K562 (cell line): ENCODE measurements at regions of chrX and their contacts with region 1.

Region 1: GRCh38 chrX:153971450-153972367 is at the start of gene HCFC1:
- DNase-seq: peak; percentile 68 to 93 (median 74)
- ATAC-seq: peak; percentile 60
- H3K4me3 ChIP-seq: peak within 1 kb of the TSS; percentile 84
- H3K27ac ChIP-seq: peak within 1 kb of the TSS; percentile 100
- H3K4me1 ChIP-seq: peaks cover 34 to 57% of the 10 kb centered on the region in 2 experiments
- H3K27me3 ChIP-seq: no peaks in the 10 kb centered on the region
- CTCF ChIP-seq: no peak
- EP300 ChIP-seq: no peak; the same call in 1 of the 2 replicates
- POLR2A ChIP-seq: peak; percentile 80
- RAD21 ChIP-seq: no peak
- polyA plus RNA-seq, gene HCFC1: 2.8 to 10.5 TPM

Region 2: GRCh38 chrX:153927922-153928760 is 43.6 kb before region 1 on chrX:
- CTCF ChIA-PET with region 1: no interaction called
- POLR2A ChIA-PET with region 1: interaction called, 5 read pairs
- in situ Hi-C with region 1: no loop called
- intact Hi-C with region 1: loop called (anchors 1 kb)
- DNase-seq: peak; percentile 85 to 97 (median 90)
- ATAC-seq: peak; percentile 90
- H3K4me3 ChIP-seq: peak overlapping the region; percentile 58
- H3K27ac ChIP-seq: peak overlapping the region; percentile 98
- H3K4me1 ChIP-seq: peaks cover 29 to 66% of the 10 kb centered on the region in 2 experiments; a peak in 4 of 5 replicates
- H3K27me3 ChIP-seq: no peaks in the 10 kb centered on the region
- CTCF ChIP-seq: peak in 2 of 3 experiments; percentile 33 to 38; a peak in 4 of 6 replicates
- EP300 ChIP-seq: no peak
- POLR2A ChIP-seq: peak; percentile 69
- RAD21 ChIP-seq: peak; percentile 14 to 25; a peak in 2 of 4 replicates

Region 3: GRCh38 chrX:153947009-153947769 is 24.5 kb before region 1 on chrX:
- CTCF ChIA-PET with region 1: no interaction called
- POLR2A ChIA-PET with region 1: interaction called, 17 read pairs
- in situ Hi-C with region 1: no loop called
- intact Hi-C with region 1: no loop called
- DNase-seq: peak; percentile 62 to 90 (median 72)
- ATAC-seq: peak; percentile 92
- H3K4me3 ChIP-seq: no peak overlapping the region
- H3K27ac ChIP-seq: peak overlapping the region; percentile 53; the same call in 2 of the 3 replicates
- H3K4me1 ChIP-seq: peaks cover 8 to 80% of the 10 kb centered on the region in 2 experiments; a peak in 4 of 5 replicates
- H3K27me3 ChIP-seq: no peaks in the 10 kb centered on the region
- CTCF ChIP-seq: peak; percentile 97 to 99 (median 99)
- EP300 ChIP-seq: no peak
- POLR2A ChIP-seq: peak; percentile 56; the same call in 1 of the 2 replicates
- RAD21 ChIP-seq: peak; percentile 74

Region 4: DNA sequence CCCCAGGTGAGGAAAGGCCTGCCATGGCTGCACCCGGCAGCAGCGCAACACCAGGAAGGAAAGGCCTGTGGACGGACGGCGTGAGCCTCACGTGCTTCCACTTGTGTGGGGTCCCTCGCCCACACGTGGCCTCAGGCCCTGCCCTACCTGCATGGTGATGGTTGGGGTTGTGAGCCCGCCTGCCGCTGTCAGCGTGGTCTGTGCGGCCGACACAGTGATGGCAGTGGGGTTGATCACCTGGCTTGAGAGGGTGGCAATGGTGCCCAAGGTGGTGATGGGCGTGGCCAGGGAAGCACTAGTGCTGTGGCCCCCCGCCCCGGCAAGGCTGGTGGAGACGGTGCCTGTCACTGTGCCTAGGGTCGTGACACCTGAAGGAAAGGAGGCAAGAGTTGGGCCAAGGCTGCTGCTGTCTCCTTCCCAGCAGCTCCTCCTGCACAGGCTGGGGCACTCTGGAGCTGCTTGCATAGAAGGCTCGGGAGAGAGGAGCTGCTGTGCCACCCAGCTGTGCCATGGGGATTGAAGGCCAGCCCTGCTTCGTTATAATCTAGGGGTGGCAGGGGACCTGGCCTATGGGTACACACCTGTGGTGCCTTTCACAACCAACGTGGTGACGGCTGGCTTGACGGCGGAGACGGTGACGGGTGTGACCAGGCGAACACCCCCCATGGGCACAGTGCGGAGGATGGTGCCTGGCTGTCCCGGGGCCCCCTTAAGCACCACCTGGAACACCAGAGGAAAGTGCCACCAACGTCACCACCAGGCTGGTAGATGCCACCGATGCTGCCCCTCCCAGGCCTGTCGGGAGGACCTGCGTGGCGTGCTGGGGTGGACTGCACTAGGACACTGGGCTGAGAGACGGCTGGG is 15.4 kb before region 1 on chrX:
- CTCF ChIA-PET with region 1: interaction called, 3 read pairs
- POLR2A ChIA-PET with region 1: interaction called, 24 read pairs
- in situ Hi-C with region 1: no loop called
- intact Hi-C with region 1: no loop called
- DNase-seq: no peak
- ATAC-seq: no peak
- H3K4me3 ChIP-seq: no peak overlapping the region
- H3K27ac ChIP-seq: no peak overlapping the region
- H3K4me1 ChIP-seq: peaks cover 0 to 29% of the 10 kb centered on the region in 2 experiments; a peak in 2 of 5 replicates
- H3K27me3 ChIP-seq: no peaks in the 10 kb centered on the region
- CTCF ChIP-seq: no peak
- EP300 ChIP-seq: no peak
- POLR2A ChIP-seq: no peak
- RAD21 ChIP-seq: no peak

Region 5: GRCh38 chrX:153961292-153961691 is 10.4 kb before region 1 on chrX:
- CTCF ChIA-PET with region 1: interaction called, 3 read pairs
- POLR2A ChIA-PET with region 1: interaction called, 24 read pairs
- in situ Hi-C with region 1: no loop called
- intact Hi-C with region 1: no loop called
- DNase-seq: no peak
- ATAC-seq: no peak
- H3K4me3 ChIP-seq: no peak overlapping the region
- H3K27ac ChIP-seq: no peak overlapping the region
- H3K4me1 ChIP-seq: peaks cover 1 to 14% of the 10 kb centered on the region in 2 experiments; a peak in 3 of 5 replicates
- H3K27me3 ChIP-seq: no peaks in the 10 kb centered on the region
- CTCF ChIP-seq: no peak
- EP300 ChIP-seq: no peak
- POLR2A ChIP-seq: no peak
- RAD21 ChIP-seq: no peak

Region 6: GRCh38 chrX:153981771-153982533 is 10.2 kb after region 1 on chrX:
- CTCF ChIA-PET with region 1: no interaction called
- POLR2A ChIA-PET with region 1: interaction called, 16 read pairs
- in situ Hi-C with region 1: no loop called
- intact Hi-C with region 1: no loop called
- DNase-seq: no peak
- ATAC-seq: no peak
- H3K4me3 ChIP-seq: no peak overlapping the region
- H3K27ac ChIP-seq: no peak overlapping the region
- H3K4me1 ChIP-seq: peaks cover 13 to 38% of the 10 kb centered on the region in 2 experiments
- H3K27me3 ChIP-seq: no peaks in the 10 kb centered on the region
- CTCF ChIP-seq: no peak
- EP300 ChIP-seq: no peak
- POLR2A ChIP-seq: no peak
- RAD21 ChIP-seq: no peak

Region 7: DNA sequence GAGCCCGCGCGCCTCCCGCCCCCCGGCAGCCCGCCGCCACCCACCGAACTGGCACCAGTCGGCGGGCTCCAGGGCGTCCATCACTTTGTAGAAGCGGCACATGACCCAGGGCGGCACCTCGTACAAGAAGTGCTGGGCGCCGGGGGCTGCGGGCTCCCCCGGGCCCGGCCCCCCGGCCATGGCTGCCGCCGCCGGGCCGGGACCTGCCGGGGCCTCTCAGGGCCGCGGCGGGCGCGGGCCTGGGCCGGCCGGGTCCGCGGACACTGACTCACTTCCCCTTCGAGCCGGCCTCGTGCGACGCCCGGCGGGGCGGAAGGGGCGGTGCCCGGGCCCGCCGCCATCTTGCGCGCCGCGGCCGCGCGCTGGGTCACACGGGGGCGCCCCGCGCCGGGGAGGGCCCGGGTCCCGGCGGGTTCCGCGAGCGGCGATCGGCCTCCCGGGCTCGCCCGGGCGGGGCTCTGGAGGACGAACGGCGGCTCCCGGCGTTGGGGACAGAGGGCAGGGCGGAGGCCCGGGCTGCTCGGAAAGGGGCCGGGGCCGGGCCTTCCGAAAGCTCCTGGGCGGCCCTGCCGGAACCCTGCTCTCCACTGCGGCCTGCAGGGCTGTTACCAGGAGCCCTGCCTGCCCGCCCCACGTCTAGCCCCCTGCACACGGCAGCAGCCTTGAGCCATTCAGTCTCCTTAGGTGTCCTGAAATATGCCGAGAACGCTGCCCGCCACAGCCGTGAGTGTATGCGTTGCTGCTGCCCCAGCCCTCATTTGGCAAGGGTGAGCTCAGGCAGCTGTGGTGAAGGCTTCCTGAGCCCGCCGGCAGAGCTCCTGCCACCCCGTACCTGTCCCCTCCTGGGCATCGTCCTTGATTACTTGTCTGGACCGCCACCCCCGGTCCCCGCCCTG is 48.2 kb after region 1 on chrX and contains the start of gene IRAK1:
- CTCF ChIA-PET with region 1: interaction called, 5 read pairs
- POLR2A ChIA-PET with region 1: interaction called, 4 read pairs
- in situ Hi-C with region 1: no loop called
- intact Hi-C with region 1: loop called (anchors 2 kb)
- DNase-seq: peak; percentile 82 to 86 (median 86)
- ATAC-seq: peak; percentile 74
- H3K4me3 ChIP-seq: peak within 1 kb of the TSS; percentile 81
- H3K27ac ChIP-seq: peak within 1 kb of the TSS; percentile 93
- H3K4me1 ChIP-seq: peaks cover 21 to 83% of the 10 kb centered on the region in 2 experiments
- H3K27me3 ChIP-seq: no peaks in the 10 kb centered on the region
- CTCF ChIP-seq: no peak
- EP300 ChIP-seq: no peak
- POLR2A ChIP-seq: peak; percentile 53
- RAD21 ChIP-seq: peak in 1 of 2 experiments; percentile 30; a peak in 2 of 4 replicates
- polyA plus RNA-seq, gene IRAK1: 11.6 to 16.1 TPM